SK-N-SH (cell line): ENCODE measurements at regions of chr19 and their contacts with region 1.

Region 1: DNA sequence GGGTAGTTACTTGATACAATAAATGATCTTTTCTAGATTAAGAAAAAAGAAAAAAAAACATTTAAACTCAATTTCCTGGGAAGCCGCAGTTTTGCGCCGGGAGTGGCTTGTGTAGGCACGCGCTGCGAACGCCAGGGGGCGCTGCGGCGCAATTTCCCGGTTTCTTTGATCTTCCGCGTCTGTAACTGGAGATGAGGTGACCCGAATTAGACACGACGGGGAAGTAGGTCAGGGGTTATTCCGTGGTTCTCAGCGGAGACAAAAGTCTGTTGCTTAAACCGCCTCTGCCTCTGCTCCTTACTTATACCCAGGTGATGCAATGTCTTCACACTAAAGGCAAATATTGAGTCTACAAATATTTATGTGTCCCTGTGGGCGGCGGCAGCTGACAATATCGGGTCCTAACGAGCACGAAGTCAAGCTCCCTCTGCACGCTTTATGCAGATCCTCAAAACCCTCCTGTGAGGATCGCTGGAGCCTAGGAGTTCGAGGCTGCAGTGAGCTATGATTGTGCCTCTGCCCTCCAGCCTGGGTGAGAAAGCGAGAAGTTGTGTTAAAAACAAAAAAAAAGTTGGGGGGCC is 15.2 kb downstream of the STXBP2 start:
- DNase-seq: peak; percentile 89
- H3K4me3 ChIP-seq: peak overlapping the region; percentile 23 to 61; a peak in 3 of 4 replicates
- H3K27ac ChIP-seq: no peak overlapping the region
- H3K4me1 ChIP-seq: peaks cover 0 to 3% of the 10 kb centered on the region in 2 experiments; a peak in 1 of 4 replicates
- H3K27me3 ChIP-seq: peaks cover 34% of the 10 kb centered on the region
- CTCF ChIP-seq: peak; percentile 99
- EP300 ChIP-seq: no peak
- RAD21 ChIP-seq: peak; percentile 62

Region 2: DNA sequence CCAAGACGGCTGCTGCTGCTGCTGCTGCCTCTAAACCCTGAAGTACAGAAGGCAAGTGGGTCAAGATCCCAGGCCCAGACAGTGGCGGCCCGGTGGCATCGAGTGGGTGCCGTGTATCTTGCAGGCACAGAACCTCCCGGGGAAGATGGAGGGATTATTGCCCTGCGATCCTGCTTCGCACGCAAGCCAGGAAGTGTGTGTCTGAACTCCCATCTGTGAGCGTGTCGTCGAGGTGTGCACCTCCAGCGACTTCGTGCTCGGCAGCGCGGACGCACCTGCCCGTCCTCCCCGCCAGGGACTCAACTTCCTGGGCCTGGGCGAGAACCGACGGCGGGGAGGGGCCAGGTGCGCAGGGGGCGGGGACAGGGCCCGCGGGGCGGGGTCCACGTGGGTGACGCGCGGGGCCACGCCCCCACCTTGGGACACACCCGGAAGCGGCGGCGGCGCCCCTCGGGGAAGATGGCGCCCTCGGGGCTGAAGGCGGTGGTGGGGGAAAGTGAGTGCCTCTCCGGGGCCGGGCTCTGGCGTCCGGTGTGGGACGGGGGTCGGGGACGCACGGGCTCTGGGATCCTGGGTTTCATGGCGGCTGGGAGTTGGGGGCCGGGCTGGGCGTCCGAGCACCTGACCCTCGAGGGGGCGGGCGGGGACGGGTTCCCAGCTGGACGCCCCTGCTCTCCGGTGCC is 15.3 kb before region 1 on chr19 and contains the start of gene STXBP2:
- CTCF ChIA-PET with region 1: interaction called, 14 read pairs
- POLR2A ChIA-PET with region 1: no interaction called
- DNase-seq: peak; percentile 73
- H3K4me3 ChIP-seq: peak within 1 kb of the TSS in 1 of 2 experiments; percentile 21; a peak in 1 of 4 replicates
- H3K27ac ChIP-seq: no peak within 1 kb of the TSS
- H3K4me1 ChIP-seq: peaks cover 0 to 4% of the 10 kb centered on the region in 2 experiments; a peak in 1 of 4 replicates
- H3K27me3 ChIP-seq: peaks cover 37% of the 10 kb centered on the region
- CTCF ChIP-seq: no peak
- EP300 ChIP-seq: no peak
- RAD21 ChIP-seq: no peak
- polyA plus RNA-seq, gene STXBP2: 1.3 and 4.7 TPM in 2 replicates

Region 3: DNA sequence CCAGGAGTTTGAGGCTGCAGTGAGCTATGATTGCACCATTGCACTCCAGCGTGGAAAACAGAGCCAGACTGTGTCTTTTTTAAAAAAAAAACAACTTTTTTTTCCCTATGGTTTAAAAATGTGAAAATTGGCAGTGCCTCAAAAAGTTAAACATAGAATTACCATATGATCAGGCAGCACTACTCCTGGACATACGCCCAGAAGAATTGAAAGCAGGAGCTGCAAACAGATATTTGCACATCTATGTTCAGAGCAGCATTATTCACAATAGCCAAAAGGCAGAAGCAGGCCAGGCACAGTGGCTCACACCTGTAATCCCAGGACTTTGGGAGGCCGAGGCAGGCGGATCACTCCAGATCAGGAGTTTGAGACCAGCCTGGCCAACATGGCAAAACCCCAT is 12.9 kb after region 1 on chr19:
- CTCF ChIA-PET with region 1: interaction called, 10 read pairs
- POLR2A ChIA-PET with region 1: no interaction called
- DNase-seq: no peak
- H3K4me3 ChIP-seq: no peak overlapping the region
- H3K27ac ChIP-seq: no peak overlapping the region
- H3K4me1 ChIP-seq: no peaks in the 10 kb centered on the region
- H3K27me3 ChIP-seq: peaks cover 79% of the 10 kb centered on the region
- CTCF ChIP-seq: no peak
- EP300 ChIP-seq: no peak
- RAD21 ChIP-seq: no peak

Region 4: DNA sequence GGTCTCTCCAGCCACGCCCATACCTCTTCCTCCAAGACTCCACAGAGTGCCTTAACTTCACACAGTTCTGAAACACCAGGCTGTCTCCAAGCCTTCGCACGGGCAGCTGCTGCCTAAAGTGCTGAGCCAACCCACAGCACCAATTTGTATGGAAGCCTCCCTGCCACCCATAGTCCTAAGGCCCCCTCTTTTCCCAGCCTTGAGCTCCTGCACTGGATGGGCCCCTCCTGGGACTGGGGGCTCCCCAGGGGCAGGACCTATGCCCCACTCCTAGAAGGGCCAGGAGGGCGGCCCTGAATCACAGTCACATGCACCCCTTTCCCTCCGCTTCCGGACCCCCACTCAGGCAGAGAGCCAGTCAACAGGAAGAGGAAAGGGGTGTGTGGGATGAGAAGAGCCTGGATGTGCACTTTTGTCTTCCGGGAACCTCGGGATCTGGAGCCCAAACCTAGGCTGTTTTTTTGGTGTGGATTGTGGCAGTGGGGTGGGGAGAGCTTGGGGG is 54.9 kb after region 1 on chr19:
- CTCF ChIA-PET with region 1: no interaction called
- POLR2A ChIA-PET with region 1: no interaction called
- DNase-seq: no peak
- H3K4me3 ChIP-seq: no peak overlapping the region
- H3K27ac ChIP-seq: no peak overlapping the region
- H3K4me1 ChIP-seq: no peaks in the 10 kb centered on the region
- H3K27me3 ChIP-seq: peaks cover 56% of the 10 kb centered on the region
- CTCF ChIP-seq: no peak
- EP300 ChIP-seq: no peak
- RAD21 ChIP-seq: no peak

Region 5: DNA sequence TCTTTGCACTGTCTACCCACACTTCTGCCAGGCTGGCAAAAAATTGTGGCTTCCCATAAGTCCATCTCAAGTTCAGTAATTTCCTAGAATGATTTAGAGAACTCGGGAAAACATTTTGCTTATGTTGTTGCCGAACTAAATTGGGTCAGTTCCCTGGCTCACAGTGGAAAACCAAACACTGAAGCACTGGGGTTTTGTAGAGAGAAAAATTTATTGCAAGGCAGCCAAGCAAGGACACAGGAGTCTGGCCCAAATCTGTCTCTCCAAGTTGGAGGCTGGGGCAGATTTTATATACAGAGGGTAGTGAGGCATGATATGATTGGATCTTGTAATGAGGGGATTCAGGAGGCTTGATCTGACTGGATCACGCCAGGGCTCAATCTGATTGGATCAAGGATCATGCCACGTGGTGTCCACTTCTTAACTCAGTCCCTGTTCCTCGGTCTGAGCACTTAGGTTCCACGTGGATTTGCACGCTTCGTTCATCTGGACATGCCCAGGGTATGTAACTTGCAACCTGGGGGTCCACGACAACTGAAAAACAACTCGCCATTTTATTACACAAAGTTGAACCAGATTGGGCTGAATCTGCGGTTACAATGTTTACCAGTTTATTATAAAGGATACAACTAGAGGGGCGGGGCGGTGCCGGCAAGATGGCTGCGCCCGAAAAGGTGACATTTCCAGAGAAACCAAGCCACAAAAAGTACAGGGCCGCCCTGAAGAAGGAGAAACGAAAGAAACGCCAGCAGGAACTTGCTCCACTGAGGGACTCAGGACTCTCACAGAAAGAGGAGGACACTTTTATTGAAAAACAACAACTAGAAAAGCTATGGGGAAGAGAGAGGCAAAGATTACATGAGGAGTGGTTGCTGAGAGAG is 87.9 kb after region 1 on chr19:
- CTCF ChIA-PET with region 1: no interaction called
- POLR2A ChIA-PET with region 1: no interaction called
- DNase-seq: no peak
- H3K4me3 ChIP-seq: no peak overlapping the region
- H3K27ac ChIP-seq: no peak overlapping the region
- H3K4me1 ChIP-seq: no peaks in the 10 kb centered on the region
- H3K27me3 ChIP-seq: peaks cover 65% of the 10 kb centered on the region
- CTCF ChIP-seq: no peak
- EP300 ChIP-seq: no peak
- RAD21 ChIP-seq: no peak

Region 6: DNA sequence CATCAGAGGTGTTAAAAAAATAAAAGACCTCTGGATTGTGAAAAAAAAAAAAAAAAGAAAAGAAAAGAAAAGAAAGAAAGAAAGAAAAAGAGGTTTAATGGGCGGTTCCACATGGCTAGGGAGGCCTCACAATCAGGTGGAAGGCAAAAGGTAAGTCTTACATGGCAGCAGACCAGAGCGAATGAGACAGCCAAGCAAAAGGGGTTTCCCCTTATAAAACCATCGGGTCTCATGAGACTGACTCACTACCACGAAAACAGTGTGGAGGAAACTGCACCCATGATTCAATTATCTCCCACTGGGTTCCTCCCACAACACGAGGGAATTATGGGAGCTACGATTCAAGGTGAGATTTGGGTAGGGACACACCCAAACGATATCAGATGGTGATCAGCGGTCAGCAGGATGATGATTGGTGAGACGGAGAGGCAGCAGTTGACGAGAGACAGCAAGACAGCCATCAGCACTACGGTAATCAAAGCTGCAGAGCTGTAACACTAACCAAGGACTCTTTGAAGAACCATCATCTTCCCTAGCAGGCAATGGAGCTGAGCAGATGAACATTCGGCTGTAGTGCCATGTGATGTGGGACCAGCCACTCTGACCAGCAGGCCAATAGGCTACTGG is 99.1 kb after region 1 on chr19:
- CTCF ChIA-PET with region 1: no interaction called
- POLR2A ChIA-PET with region 1: no interaction called
- DNase-seq: no peak
- H3K4me3 ChIP-seq: no peak overlapping the region
- H3K27ac ChIP-seq: no peak overlapping the region
- H3K4me1 ChIP-seq: no peaks in the 10 kb centered on the region
- H3K27me3 ChIP-seq: peaks cover 17% of the 10 kb centered on the region
- CTCF ChIP-seq: no peak
- EP300 ChIP-seq: no peak
- RAD21 ChIP-seq: no peak